ENCODE measurements at regions of chr6 and their contacts with region 1.

Region 1: DNA sequence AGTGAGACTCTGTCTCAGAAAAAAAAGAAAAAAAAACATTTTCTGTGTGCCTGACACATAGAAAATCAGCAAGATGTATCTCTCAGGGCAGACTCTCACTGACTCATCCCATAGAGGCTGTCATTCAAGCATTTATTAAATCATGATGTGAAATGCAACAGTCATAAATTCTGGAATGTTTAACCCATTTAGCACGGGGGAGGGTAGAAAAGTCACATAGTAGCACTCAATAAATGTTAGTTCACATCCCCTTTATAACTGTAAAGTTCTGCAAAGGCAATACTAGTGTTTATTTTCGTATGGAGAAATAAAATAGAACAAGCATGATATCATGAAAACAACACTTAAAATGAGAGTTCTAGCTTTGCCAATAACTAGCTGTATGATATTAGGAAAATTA is 15.5 kb upstream of the CARMIL1 start:
- DNase-seq: no peak
- ATAC-seq: no peak
- H3K4me3 ChIP-seq: no peak overlapping the region
- H3K4me3 Mint-ChIP-seq: no peak overlapping the region
- H3K27ac ChIP-seq: no peak overlapping the region
- H3K27ac Mint-ChIP-seq: no peak overlapping the region
- H3K4me1 ChIP-seq: no peaks in the 10 kb centered on the region
- H3K4me1 Mint-ChIP-seq: peaks cover 2% of the 10 kb centered on the region
- H3K27me3 ChIP-seq: no peaks in the 10 kb centered on the region
- H3K27me3 Mint-ChIP-seq: peaks cover 2% of the 10 kb centered on the region
- CTCF ChIP-seq: no peak

Region 2: GRCh38 chr6:25223490-25223991 is 40.1 kb before region 1 on chr6:
- CTCF ChIA-PET with region 1: interaction called, 20 read pairs
- POLR2A ChIA-PET with region 1: no interaction called
- intact Hi-C with region 1: loop called in 1 of 2 experiments (anchors 5 kb)
- DNase-seq: peak; percentile 19 to 79 (median 66)
- ATAC-seq: peak; percentile 61
- H3K4me3 ChIP-seq: peak overlapping the region in 1 of 2 experiments; percentile 23
- H3K4me3 Mint-ChIP-seq: peak overlapping the region; percentile 72
- H3K27ac ChIP-seq: no peak overlapping the region
- H3K27ac Mint-ChIP-seq: no peak overlapping the region
- H3K4me1 ChIP-seq: peaks cover 6% of the 10 kb centered on the region
- H3K4me1 Mint-ChIP-seq: peaks cover 10% of the 10 kb centered on the region
- H3K27me3 ChIP-seq: no peaks in the 10 kb centered on the region
- H3K27me3 Mint-ChIP-seq: peaks cover 7% of the 10 kb centered on the region
- CTCF ChIP-seq: peak; percentile 96

Region 3: GRCh38 chr6:25278914-25279747 is 15.5 kb after region 1 on chr6 and contains the start of gene CARMIL1:
- CTCF ChIA-PET with region 1: interaction called, 45 read pairs
- POLR2A ChIA-PET with region 1: interaction called, 3 read pairs
- intact Hi-C with region 1: loop called in 1 of 2 experiments (anchors 2 kb)
- DNase-seq: peak; percentile 28 to 85 (median 68)
- ATAC-seq: peak; percentile 71
- H3K4me3 ChIP-seq: peak within 1 kb of the TSS; percentile 55 to 73
- H3K4me3 Mint-ChIP-seq: peak within 1 kb of the TSS; percentile 94
- H3K27ac ChIP-seq: peak within 1 kb of the TSS in 1 of 2 experiments; percentile 54
- H3K27ac Mint-ChIP-seq: peak within 1 kb of the TSS; percentile 88
- H3K4me1 ChIP-seq: peaks cover 18% of the 10 kb centered on the region
- H3K4me1 Mint-ChIP-seq: peaks cover 37% of the 10 kb centered on the region
- H3K27me3 ChIP-seq: no peaks in the 10 kb centered on the region
- H3K27me3 Mint-ChIP-seq: peaks cover 3% of the 10 kb centered on the region
- CTCF ChIP-seq: peak; percentile 65
- total RNA-seq, gene CARMIL1: 5.0 to 6.1 TPM

Region 4: GRCh38 chr6:25519856-25520255 is 256.2 kb after region 1 on chr6:
- CTCF ChIA-PET with region 1: interaction called, 10 read pairs
- POLR2A ChIA-PET with region 1: no interaction called
- intact Hi-C with region 1: no loop called
- DNase-seq: no peak
- ATAC-seq: no peak
- H3K4me3 ChIP-seq: no peak overlapping the region
- H3K4me3 Mint-ChIP-seq: no peak overlapping the region
- H3K27ac ChIP-seq: no peak overlapping the region
- H3K27ac Mint-ChIP-seq: no peak overlapping the region
- H3K4me1 ChIP-seq: no peaks in the 10 kb centered on the region
- H3K4me1 Mint-ChIP-seq: no peaks in the 10 kb centered on the region
- H3K27me3 ChIP-seq: no peaks in the 10 kb centered on the region
- H3K27me3 Mint-ChIP-seq: no peaks in the 10 kb centered on the region
- CTCF ChIP-seq: no peak

Region 5: GRCh38 chr6:25556516-25556915 is 292.9 kb after region 1 on chr6:
- CTCF ChIA-PET with region 1: interaction called, 52 read pairs
- POLR2A ChIA-PET with region 1: interaction called, 3 read pairs
- intact Hi-C with region 1: loop called (anchors 1 kb)
- DNase-seq: peak; percentile 61 to 83 (median 76)
- ATAC-seq: peak; percentile 54
- H3K4me3 ChIP-seq: no peak overlapping the region
- H3K4me3 Mint-ChIP-seq: no peak overlapping the region
- H3K27ac ChIP-seq: no peak overlapping the region
- H3K27ac Mint-ChIP-seq: no peak overlapping the region
- H3K4me1 ChIP-seq: no peaks in the 10 kb centered on the region
- H3K4me1 Mint-ChIP-seq: peaks cover 2% of the 10 kb centered on the region
- H3K27me3 ChIP-seq: no peaks in the 10 kb centered on the region
- H3K27me3 Mint-ChIP-seq: no peaks in the 10 kb centered on the region
- CTCF ChIP-seq: peak; percentile 93

Region 6: GRCh38 chr6:25942561-25943147 is 679.0 kb after region 1 on chr6:
- CTCF ChIA-PET with region 1: no interaction called
- POLR2A ChIA-PET with region 1: no interaction called
- intact Hi-C with region 1: loop called in 1 of 2 experiments (anchors 5 kb)
- DNase-seq: peak in 2 of 9 experiments; percentile 53 to 67
- ATAC-seq: peak; percentile 38
- H3K4me3 ChIP-seq: no peak overlapping the region
- H3K4me3 Mint-ChIP-seq: no peak overlapping the region
- H3K27ac ChIP-seq: no peak overlapping the region
- H3K27ac Mint-ChIP-seq: no peak overlapping the region
- H3K4me1 ChIP-seq: no peaks in the 10 kb centered on the region
- H3K4me1 Mint-ChIP-seq: peaks cover 3% of the 10 kb centered on the region
- H3K27me3 ChIP-seq: no peaks in the 10 kb centered on the region
- H3K27me3 Mint-ChIP-seq: peaks cover 4% of the 10 kb centered on the region
- CTCF ChIP-seq: peak; percentile 65